AG04449 (cell line): ENCODE measurements at regions of chr11 and their contacts with region 1.

Region 1: DNA sequence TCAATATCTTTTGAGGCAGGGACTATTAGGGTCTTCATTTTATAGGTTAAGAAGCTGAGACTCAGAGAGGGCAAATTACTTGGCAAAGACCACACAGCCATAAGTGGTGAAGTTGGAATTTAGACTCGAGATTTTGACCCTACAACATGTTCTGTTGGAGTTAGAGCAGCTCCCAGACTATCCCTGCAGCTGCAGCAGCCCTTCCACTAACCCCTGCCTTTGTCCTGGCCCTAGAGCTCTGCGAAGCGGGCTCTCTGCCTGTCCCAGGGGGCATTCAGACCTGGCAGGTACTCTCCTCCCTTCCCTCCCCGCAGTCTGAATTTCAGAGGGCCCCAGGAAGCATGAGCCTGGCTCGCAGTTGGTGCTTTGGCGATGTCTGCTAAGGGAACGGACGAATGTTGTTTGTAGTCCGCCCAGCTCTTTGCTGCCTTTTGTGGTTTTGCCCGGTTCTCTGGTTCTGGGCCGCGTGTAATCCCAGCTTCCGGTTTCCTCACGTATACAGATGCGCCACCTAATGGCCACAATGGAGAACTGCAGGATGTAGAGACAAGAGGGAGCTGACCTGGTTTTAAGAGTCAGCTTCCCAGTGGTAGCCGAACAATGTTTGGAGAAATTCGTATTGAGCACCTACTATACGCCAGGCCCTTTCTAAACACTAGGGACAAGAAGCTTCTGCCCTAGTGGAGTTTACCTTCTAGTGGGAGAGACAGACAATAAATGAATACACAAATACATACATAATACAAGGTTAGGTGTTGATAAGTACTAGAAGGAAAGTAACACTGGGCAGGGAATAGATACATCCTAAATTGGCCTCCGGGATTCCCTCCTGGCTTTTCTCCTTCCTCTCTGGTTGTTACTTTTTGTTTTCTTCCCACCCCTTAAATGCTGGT is 125.2 kb downstream of the ST3GAL4 start:
- DNase-seq: peak; percentile 41
- H3K4me3 ChIP-seq: peak overlapping the region; percentile 24; the same call in 1 of the 2 replicates
- CTCF ChIP-seq: peak; percentile 89

Region 2: GRCh38 chr11:126140932-126141291 is 339.7 kb before region 1 on chr11:
- CTCF ChIA-PET with region 1: no interaction called
- POLR2A ChIA-PET with region 1: no interaction called
- DNase-seq: no peak
- H3K4me3 ChIP-seq: no peak overlapping the region
- CTCF ChIP-seq: no peak

Region 3: DNA sequence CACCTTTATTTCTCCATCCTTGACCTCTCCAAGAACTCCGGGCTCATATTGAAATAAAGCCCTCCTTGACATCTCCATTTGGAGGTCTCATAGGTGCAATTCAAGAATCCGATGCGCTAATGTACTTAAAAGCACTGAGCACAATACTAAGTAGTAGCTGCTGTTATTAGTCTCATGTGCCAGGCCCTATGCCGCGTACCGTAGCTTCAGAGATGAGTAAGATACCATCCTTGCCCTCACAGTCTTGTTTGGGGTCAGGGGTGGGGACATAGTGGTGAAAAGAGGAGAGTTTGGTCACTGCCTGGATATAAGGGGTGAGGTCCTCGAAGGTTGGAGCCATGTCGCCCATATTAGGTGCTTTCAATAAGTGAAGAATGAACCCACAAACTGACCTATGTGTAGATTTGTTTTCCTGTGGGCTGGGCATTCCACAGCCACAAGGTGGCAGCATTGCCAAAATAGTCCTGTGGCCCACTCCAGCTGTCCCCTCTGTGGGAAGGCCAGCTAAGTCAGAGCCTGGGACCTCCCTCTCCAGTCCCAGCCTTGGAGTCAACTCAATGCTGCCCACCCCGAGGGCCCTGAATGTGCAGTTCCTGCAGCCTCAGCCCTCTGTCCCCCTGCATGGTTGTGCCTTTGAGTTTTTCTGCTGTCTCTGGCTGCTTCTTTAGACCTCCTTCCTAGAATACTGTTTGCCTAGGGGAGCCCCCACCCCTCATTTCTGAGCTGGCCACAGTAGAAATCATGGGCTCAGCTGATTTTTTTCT is 170.2 kb before region 1 on chr11:
- CTCF ChIA-PET with region 1: interaction called, 260 read pairs
- POLR2A ChIA-PET with region 1: interaction called, 4 read pairs
- DNase-seq: no peak
- H3K4me3 ChIP-seq: no peak overlapping the region
- CTCF ChIP-seq: peak; percentile 78

Region 4: DNA sequence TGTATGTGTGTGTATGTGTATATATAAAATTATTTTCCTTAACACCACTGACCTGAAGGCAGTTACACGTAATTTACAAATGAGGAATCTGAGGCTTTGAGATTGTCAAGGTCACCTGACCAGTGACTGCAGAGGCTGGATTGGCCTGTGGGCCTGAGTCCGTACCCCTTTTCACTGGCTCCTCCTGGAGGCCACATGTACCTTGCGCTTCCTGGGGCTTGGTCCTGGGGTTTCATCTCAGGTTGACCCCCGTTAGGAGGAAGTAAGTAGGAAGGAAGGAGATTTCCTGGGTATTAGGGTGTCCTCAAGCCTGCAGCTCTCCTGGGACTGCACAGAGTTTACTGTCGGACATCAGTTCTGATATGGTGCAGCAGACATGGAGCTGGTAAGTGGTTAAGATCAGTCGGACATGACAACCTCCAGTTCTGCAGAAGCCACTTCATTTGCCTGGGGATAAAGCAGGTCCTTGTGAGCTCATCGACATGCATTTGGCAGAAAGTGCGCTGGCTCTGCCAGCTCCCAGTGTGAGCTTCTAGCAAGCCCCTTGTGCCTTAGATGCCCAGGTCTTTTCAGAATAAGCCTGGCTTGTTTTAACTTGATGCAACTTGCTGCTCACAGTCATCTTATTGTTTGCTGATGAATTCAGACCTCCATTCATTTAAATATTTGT is 88.6 kb before region 1 on chr11:
- CTCF ChIA-PET with region 1: no interaction called
- POLR2A ChIA-PET with region 1: no interaction called
- DNase-seq: no peak
- H3K4me3 ChIP-seq: no peak overlapping the region
- CTCF ChIP-seq: no peak

Region 5: DNA sequence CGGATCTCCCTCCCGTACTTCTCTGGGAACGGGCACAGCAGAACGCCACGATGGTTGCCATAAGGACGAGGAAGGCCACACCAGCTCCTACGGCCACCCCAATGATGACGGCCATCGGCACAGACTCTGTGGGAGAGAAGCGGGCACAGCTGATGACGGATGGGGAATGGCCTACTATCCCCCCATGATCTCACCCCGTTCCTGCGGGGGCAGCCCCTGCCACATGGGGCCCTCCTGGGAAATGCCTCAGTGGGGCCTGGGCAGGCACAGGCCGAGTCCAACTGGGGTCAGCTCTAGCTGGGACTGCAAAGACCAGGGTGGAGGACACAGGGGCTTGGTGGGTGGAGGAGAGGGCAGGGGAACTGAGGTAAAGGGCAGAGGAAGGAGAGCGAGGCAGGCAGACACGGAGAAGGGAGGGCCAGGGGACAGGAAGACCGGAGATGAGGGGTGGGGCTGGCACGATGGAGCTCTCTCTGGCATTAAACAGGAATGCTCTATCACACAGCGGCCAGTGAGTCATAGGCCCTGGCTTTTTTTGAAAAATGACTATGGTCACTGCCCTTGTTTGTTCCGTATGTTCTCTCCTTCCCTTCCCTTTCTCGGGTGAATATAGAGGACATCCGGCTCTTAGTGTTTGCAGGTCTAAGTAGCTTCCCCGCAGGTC is 49.1 kb before region 1 on chr11:
- CTCF ChIA-PET with region 1: interaction called, 10 read pairs
- POLR2A ChIA-PET with region 1: no interaction called
- DNase-seq: peak; percentile 21
- H3K4me3 ChIP-seq: no peak overlapping the region
- CTCF ChIP-seq: no peak

Region 6: DNA sequence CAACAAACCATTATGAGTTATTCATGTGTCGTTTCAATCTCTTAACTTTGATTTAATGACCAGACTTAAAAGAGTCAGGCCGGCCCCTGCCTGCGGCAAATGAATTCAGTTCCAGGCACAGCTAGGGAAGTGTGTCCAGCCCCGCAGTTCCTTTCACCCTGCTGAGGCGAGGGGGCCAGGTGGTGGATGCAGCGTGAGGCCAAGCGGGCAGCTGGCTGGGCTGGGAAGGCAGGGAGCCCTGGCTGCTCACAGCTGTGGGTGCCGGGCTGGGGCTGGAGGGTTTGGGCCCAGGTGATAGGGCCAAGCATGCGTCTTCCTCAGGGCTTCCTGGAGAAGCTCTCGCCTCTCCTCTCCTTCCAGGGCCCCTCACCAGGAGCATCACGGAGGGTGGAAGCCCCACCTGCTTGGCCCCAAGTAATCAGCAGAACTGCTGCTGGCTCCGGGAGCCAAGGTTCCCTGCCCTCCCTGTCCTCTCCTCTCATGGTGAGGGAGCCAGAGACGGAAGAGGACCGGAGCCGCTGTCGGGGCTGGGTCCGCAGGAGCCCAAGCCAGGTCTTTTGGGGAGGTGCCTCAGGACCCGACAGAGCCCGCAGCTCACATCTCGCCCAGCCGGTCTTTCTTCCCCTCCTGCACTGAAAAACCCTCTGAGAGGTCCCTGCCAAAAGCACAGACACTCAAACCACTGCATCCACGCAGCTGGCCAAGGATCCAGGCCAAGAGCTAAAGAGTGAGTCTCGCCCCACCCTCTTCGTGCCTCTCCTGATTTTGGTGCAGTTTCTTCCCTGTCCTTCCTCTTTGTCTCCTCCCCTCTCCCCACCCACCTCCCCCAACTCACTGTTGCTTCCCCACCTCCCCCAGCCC is 28.2 kb before region 1 on chr11:
- CTCF ChIA-PET with region 1: interaction called, 135 read pairs
- POLR2A ChIA-PET with region 1: no interaction called
- DNase-seq: no peak
- H3K4me3 ChIP-seq: no peak overlapping the region
- CTCF ChIP-seq: no peak

Region 7: DNA sequence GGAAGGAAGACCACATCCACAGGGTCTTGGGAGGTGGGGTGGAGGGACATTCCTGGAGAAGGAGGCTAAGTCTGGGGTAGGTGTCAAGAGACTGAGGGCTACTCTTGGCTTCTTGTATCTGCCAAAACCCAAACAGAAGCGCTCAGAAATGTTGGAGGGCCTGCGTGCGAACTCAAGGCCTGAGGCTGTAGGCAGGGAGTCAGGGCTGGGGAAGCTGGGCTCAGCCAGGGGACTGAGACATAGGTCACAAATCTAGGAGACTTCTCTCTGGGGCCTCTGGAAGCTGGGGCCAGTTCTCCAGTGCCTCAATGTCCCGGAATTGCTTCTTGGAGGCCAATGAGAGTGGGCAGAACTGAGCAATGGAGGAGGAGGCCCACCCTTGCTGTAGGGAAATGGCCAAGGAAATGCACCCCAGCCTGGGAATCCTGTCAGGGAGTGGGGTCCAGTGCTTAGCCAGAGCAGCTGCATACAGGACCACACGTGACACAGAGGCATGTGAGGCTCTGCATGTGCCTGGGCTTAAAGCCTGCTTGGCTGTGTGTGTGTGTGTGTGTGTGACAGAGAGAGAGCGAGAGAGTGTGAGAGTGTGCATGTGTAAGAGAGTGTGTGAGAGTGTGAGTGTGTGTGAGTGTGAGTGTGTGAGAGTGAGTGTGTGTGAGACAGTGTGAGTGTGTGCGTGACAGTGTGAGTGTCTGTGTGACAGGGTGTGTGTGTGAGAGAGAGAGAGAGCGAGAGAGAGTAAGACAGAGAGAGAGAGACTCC is 16.1 kb after region 1 on chr11:
- CTCF ChIA-PET with region 1: interaction called, 13 read pairs
- POLR2A ChIA-PET with region 1: no interaction called
- DNase-seq: no peak
- H3K4me3 ChIP-seq: no peak overlapping the region
- CTCF ChIP-seq: no peak

Region 8: GRCh38 chr11:126585781-126586491 is 105.3 kb after region 1 on chr11:
- CTCF ChIA-PET with region 1: interaction called, 16 read pairs
- POLR2A ChIA-PET with region 1: no interaction called
- DNase-seq: peak; percentile 89
- H3K4me3 ChIP-seq: peak overlapping the region; percentile 36
- CTCF ChIP-seq: no peak

Region 9: DNA sequence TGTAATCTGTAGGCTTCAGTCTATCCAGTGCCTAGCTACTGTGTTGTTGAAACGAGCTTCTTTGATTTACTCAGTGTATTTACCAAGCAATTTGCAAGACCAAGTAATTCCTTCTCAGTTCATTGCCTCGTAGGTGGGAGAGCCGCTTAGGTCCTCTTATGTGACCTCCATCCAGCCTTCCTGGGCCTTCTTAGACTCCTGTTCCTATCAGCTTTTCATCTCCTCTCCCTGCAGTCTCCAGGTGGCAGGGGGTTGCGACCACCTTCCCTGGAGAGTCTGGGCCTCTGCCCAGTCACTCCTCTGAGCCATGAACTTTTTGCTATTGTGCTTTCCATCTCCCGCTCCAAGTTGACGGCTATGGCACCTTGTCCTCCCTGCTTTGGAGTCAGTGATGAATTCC is 268.1 kb after region 1 on chr11:
- CTCF ChIA-PET with region 1: no interaction called
- POLR2A ChIA-PET with region 1: no interaction called
- DNase-seq: no peak
- H3K4me3 ChIP-seq: no peak overlapping the region
- CTCF ChIP-seq: no peak

Region 10: DNA sequence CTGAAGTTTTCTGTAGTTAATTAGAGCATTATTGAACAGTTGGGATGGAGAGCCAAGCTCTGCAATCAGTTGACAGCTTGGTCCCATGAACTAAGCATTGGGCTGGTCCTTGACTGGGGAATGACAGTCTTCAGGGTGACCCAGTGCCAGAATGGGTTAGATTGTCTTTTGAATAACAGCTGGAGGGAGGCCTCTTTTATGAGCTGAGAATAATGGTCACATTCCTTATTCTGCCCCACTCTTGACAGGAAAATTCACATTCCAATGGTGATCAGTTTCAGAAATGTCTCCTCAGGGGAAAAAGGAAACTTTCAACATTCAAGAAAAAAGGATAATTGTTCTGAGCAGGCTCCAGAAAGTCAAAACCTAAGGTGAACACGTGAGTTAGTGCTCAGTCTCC is 406.0 kb after region 1 on chr11:
- CTCF ChIA-PET with region 1: no interaction called
- POLR2A ChIA-PET with region 1: no interaction called
- DNase-seq: no peak
- H3K4me3 ChIP-seq: no peak overlapping the region
- CTCF ChIP-seq: no peak